A673 (cell line): ENCODE measurements at regions of chr10 and their contacts with region 1.

Region 1: GRCh38 chr10:73625884-73626752 is 15.2 kb downstream of the MYOZ1 start:
- DNase-seq: peak; percentile 99
- H3K4me3 ChIP-seq: peak overlapping the region; percentile 78
- H3K27ac ChIP-seq: peak overlapping the region; percentile 84
- H3K4me1 ChIP-seq: peaks cover 6% of the 10 kb centered on the region
- H3K27me3 ChIP-seq: no peaks in the 10 kb centered on the region
- CTCF ChIP-seq: no peak

Region 2: DNA sequence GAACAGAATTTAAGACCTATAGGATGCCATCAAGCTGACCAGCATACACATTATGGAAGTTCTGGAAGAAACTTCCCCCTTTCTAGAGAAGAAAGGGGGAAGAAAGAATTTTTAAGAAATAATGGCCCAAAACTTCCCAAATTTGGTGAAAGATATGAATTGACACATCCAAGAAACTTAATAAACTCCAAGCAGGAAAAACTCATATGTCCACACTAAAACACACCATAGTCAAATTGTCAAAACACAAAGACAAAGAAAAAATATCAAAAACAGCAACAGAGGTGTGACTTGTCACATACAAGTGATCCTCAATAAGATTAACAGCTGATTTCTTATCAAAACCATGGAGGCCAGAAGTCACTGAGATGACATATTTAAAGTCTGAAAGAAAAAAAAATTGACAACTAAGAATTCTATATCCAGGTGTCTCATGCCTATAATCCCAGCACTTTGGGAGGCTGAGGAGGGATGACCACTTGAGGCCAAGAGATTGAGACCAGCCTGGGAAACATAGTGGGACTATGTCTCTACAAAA is 319.9 kb before region 1 on chr10:
- CTCF ChIA-PET with region 1: interaction called, 10 read pairs
- POLR2A ChIA-PET with region 1: no interaction called
- intact Hi-C with region 1: no loop called
- DNase-seq: no peak
- H3K4me3 ChIP-seq: no peak overlapping the region
- H3K27ac ChIP-seq: no peak overlapping the region
- H3K4me1 ChIP-seq: no peaks in the 10 kb centered on the region
- H3K27me3 ChIP-seq: no peaks in the 10 kb centered on the region
- CTCF ChIP-seq: no peak

Region 3: DNA sequence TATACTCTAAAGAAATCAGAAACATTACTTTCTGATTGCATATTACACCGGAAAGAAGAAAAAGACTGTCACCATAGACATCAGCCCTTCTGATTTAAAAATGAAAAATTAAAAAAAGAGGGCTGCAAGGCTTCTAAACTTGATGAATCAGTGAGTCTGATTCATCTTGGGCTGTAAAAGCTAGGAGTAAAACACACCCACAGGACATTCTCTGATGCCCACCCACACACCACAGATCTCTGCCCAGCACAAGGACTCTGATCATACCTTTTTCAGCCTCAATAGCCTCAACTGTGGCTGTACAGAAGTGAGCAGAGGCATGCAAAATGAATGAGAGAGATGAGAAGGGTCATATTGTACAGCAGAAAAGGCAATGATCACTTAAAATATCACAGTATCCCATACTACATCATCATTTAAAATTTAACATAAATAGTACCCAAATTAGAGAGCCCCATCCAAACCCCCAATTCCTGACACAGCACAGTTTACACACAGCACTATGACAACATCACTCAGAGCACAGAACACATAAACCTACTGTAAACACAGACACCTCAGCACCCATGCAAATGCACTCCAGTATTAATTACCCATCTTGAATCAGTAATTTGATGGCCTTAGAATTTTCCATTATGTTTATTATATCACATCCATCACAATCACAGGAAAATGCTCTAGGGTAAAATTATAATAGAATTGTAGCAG is 186.4 kb before region 1 on chr10:
- CTCF ChIA-PET with region 1: no interaction called
- POLR2A ChIA-PET with region 1: no interaction called
- intact Hi-C with region 1: no loop called
- DNase-seq: no peak
- H3K4me3 ChIP-seq: no peak overlapping the region
- H3K27ac ChIP-seq: no peak overlapping the region
- H3K4me1 ChIP-seq: no peaks in the 10 kb centered on the region
- H3K27me3 ChIP-seq: no peaks in the 10 kb centered on the region
- CTCF ChIP-seq: no peak

Region 4: DNA sequence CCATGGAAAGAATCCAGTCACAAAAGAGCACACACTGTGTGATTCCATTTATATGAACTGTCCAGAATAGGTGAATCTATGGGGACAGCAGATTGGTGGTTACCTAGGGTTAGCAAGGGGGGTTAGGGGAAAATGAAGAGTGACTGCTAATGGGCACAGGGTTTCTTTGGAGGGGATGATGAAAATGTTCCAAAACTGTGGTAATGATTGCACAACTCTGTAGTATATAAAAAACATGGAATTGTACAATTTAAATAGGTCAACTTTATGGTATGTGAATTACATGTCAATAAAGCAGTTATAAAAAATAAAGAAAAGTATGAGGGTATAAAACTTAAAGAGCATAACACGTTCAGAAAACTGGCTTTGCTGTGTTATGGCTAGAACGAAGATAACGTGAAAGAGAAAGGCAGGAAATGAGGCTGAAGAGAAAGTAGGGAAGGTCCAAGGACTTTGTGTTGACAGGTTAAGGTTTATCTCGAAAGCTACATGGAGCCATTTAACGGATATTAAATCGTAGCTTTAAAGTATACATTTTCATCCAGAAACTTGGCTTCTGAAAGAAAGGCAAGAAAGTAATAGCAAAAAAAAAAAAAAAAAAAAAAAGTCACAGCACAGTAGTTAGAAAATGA is 166.3 kb before region 1 on chr10:
- CTCF ChIA-PET with region 1: no interaction called
- POLR2A ChIA-PET with region 1: no interaction called
- intact Hi-C with region 1: no loop called
- DNase-seq: no peak
- H3K4me3 ChIP-seq: no peak overlapping the region
- H3K27ac ChIP-seq: no peak overlapping the region
- H3K4me1 ChIP-seq: no peaks in the 10 kb centered on the region
- H3K27me3 ChIP-seq: no peaks in the 10 kb centered on the region
- CTCF ChIP-seq: no peak

Region 5: GRCh38 chr10:73576178-73576889 is 49.8 kb before region 1 on chr10:
- CTCF ChIA-PET with region 1: no interaction called
- POLR2A ChIA-PET with region 1: interaction called, 10 read pairs
- intact Hi-C with region 1: no loop called
- DNase-seq: no peak
- H3K4me3 ChIP-seq: no peak overlapping the region
- H3K27ac ChIP-seq: no peak overlapping the region
- H3K4me1 ChIP-seq: no peaks in the 10 kb centered on the region
- H3K27me3 ChIP-seq: no peaks in the 10 kb centered on the region
- CTCF ChIP-seq: no peak